Activated T-helper 1 cell treated with anti-CD3 and anti-CD28 coated beads, Interleukin-12 subunit alpha, Interleukin-12 subunit beta, Interleukin-2, Interleukin-4 antibody, amounts not matched to agents 30 ng/mL and 10 ng/mL and 1 ng/mL, durations not matched to agents 14 hours and 24 hours and 36 hours (primary cell): ENCODE measurements at regions of chr9 and their contacts with region 1.

Region 1: DNA sequence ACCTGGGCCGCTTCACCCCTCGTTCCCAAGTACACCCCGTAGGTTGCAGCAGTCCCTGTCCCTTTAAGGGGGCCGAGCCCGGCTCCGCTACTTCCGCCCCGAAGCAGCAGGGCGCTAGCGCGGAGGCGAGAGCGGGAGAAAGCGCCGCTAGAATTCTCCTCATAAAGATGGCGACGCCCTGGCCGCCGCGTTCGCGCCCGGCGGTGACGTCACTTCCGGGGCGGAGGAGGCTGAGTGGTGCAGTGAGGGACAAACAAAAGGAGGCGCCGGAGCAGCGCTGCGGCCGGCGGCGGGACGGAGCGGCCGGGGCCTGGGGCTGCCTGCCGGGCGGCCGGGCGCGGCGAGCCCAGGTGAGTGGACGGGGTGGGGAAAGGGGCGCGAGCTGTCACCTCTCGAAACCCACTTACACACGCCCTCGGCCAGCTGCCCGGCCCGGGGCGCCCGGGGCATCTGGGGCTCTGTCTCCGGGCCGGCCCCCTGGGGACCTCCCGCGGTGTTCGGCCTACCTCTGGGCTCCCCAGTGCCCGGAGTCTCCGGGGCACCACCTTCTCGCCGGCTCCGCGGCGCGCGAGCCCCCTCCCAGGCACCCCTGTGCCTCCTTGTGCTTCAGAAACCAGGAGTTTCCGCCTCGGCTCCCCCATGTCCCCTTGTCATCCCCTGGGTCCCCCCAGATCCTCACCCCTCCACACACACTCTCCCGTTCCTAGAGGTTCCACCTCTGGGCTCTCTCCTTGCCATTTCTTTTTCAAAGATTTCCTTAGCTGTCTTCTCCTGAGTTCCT is at the starts of genes KYAT1 and LRRC8A:
- DNase-seq: peak; percentile 99
- H3K4me3 Mint-ChIP-seq: peak within 1 kb of the TSS; percentile 96
- H3K27ac Mint-ChIP-seq: peak within 1 kb of the TSS; percentile 97
- H3K4me1 Mint-ChIP-seq: peaks cover 53% of the 10 kb centered on the region
- H3K27me3 Mint-ChIP-seq: peaks cover 2% of the 10 kb centered on the region
- total RNA-seq, gene KYAT1: 10.6 and 12.2 TPM in 2 replicates
- total RNA-seq, gene LRRC8A: 30.1 and 32.9 TPM in 2 replicates

Region 2: GRCh38 chr9:128322404-128323211 is 559.5 kb before region 1 on chr9 and contains the starts of genes COQ4 and TRUB2:
- intact Hi-C with region 1: loop called (anchors 1 kb)
- DNase-seq: peak; percentile 91
- H3K4me3 Mint-ChIP-seq: peak within 1 kb of the TSS; percentile 98
- H3K27ac Mint-ChIP-seq: peak within 1 kb of the TSS; percentile 100
- H3K4me1 Mint-ChIP-seq: peaks cover 12% of the 10 kb centered on the region
- H3K27me3 Mint-ChIP-seq: peaks cover 2% of the 10 kb centered on the region
- total RNA-seq, gene COQ4: 59.0 and 59.5 TPM in 2 replicates
- total RNA-seq, gene TRUB2: 41.8 and 44.0 TPM in 2 replicates

Region 3: GRCh38 chr9:128702445-128702948 is 179.6 kb before region 1 on chr9 and contains the start of gene PKN3:
- intact Hi-C with region 1: loop called (anchors 2 kb)
- DNase-seq: peak; percentile 82
- H3K4me3 Mint-ChIP-seq: peak within 1 kb of the TSS; percentile 86
- H3K27ac Mint-ChIP-seq: peak within 1 kb of the TSS; percentile 77
- H3K4me1 Mint-ChIP-seq: no peaks in the 10 kb centered on the region
- H3K27me3 Mint-ChIP-seq: peaks cover 2% of the 10 kb centered on the region
- total RNA-seq, gene PKN3: 17.7 and 19.3 TPM in 2 replicates

Region 4: GRCh38 chr9:128786681-128787601 is 95.2 kb before region 1 on chr9 and contains the start of gene TBC1D13:
- intact Hi-C with region 1: loop called (anchors 1 kb)
- DNase-seq: peak; percentile 84
- H3K4me3 Mint-ChIP-seq: peak within 1 kb of the TSS; percentile 97
- H3K27ac Mint-ChIP-seq: peak within 1 kb of the TSS; percentile 89
- H3K4me1 Mint-ChIP-seq: peaks cover 22% of the 10 kb centered on the region
- H3K27me3 Mint-ChIP-seq: no peaks in the 10 kb centered on the region
- total RNA-seq, gene TBC1D13: 21.2 and 22.3 TPM in 2 replicates

Region 5: DNA sequence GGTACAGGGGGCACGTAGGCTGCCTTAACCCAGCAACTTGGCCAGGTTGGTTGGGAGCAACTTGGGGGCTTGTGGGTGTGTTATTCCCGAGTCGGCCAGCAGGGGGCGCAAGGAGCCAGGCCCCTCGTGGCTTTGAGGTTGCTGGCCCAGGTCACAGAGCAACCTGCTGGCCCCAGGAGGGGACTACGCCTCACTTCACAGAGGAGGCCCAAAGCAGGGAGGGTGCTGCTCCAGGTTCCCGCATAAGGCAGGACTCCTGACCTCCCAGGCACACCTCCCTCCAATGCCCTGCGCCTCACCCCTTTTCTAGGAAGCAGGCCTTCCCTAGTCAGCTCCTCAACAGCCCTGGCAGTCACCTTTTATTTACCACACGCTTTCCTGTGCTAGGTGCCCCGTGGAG is 18.4 kb before region 1 on chr9:
- intact Hi-C with region 1: loop called (anchors 1 kb)
- DNase-seq: peak; percentile 77
- H3K4me3 Mint-ChIP-seq: no peak overlapping the region
- H3K27ac Mint-ChIP-seq: no peak overlapping the region
- H3K4me1 Mint-ChIP-seq: peaks cover 6% of the 10 kb centered on the region
- H3K27me3 Mint-ChIP-seq: no peaks in the 10 kb centered on the region

Region 6: DNA sequence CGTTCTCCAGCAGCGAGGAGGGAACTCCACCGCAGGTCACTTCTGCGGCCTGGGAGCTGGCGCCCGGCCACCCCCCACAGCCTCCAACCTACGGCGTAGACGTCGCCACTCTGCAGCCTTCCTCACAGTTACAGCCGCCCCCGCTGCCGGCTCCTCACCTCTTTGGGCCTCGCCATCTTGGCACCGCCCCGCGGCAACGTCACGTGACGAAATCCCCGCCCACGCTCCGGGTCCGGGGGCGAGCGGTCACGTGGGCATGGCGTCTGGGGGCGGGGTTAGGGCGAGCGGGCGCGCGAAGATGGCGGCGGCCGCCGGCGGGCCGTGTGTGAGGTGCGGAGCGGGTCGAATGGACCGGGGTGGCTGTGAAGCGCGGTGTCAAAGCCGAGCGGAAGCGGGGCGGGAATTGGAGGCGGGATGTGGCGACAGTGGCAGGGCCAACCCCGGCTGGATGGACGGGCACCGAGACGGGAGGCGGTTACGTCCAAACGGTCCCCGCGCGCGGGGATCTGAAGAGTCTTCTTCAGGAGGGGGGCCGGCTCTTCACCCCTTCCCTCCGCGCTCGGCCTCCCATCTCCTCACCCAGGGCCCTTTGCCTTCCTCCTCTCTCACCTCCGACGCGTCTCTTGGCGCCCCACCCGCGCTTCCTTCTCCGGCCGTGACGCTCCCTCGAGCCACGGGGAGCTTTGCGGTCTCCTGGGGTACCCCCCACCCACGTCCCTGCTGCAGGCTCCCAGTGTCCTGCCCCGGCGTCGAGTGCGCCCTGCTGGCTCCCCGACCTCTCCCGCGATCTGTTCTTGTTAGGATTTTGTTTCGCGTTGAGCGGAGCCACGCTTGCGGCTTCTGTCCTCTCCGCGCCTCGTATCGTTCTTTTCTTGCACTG is 65.6 kb after region 1 on chr9 and contains the starts of genes DOLK and NUP188:
- intact Hi-C with region 1: loop called (anchors 1 kb)
- DNase-seq: peak; percentile 99
- H3K4me3 Mint-ChIP-seq: peak within 1 kb of the TSS; percentile 98
- H3K27ac Mint-ChIP-seq: peak within 1 kb of the TSS; percentile 99
- H3K4me1 Mint-ChIP-seq: peaks cover 37% of the 10 kb centered on the region
- H3K27me3 Mint-ChIP-seq: no peaks in the 10 kb centered on the region
- total RNA-seq, gene DOLK: 17.7 and 18.1 TPM in 2 replicates
- total RNA-seq, gene NUP188: 154 and 158 TPM in 2 replicates

Region 7: GRCh38 chr9:129080602-129081387 is 198.7 kb after region 1 on chr9 and contains the start of gene DOLPP1:
- intact Hi-C with region 1: loop called (anchors 2 kb)
- DNase-seq: peak; percentile 99
- H3K4me3 Mint-ChIP-seq: peak within 1 kb of the TSS; percentile 94
- H3K27ac Mint-ChIP-seq: peak within 1 kb of the TSS; percentile 82
- H3K4me1 Mint-ChIP-seq: peaks cover 17% of the 10 kb centered on the region
- H3K27me3 Mint-ChIP-seq: peaks cover 2% of the 10 kb centered on the region
- total RNA-seq, gene DOLPP1: 28.4 and 30.2 TPM in 2 replicates